Activated CD4-positive, alpha-beta T cell treated with anti-CD3 and anti-CD28 coated beads, Interleukin-2, amount 10 ng/mL, durations not matched to agents 24 days and 14 days (primary cell): ENCODE measurements at regions of chr1 and their contacts with region 1.

Region 1: GRCh38 chr1:199113265-199113869 is 474.5 kb downstream of the PTPRC start:
- DNase-seq: peak; percentile 89
- H3K4me3 Mint-ChIP-seq: no peak overlapping the region
- H3K27ac Mint-ChIP-seq: no peak overlapping the region
- H3K4me1 Mint-ChIP-seq: peaks cover 11% of the 10 kb centered on the region
- H3K27me3 Mint-ChIP-seq: no peaks in the 10 kb centered on the region

Region 2: GRCh38 chr1:198959032-198959431 is 154.3 kb before region 1 on chr1:
- intact Hi-C with region 1: no loop called
- DNase-seq: peak; percentile 71
- H3K4me3 Mint-ChIP-seq: peak overlapping the region; percentile 28
- H3K27ac Mint-ChIP-seq: peak overlapping the region; percentile 17
- H3K4me1 Mint-ChIP-seq: peaks cover 27% of the 10 kb centered on the region
- H3K27me3 Mint-ChIP-seq: no peaks in the 10 kb centered on the region

Region 3: GRCh38 chr1:199243423-199244061 is 130.2 kb after region 1 on chr1:
- intact Hi-C with region 1: loop called (anchors 2 kb)
- DNase-seq: peak; percentile 93
- H3K4me3 Mint-ChIP-seq: no peak overlapping the region
- H3K27ac Mint-ChIP-seq: no peak overlapping the region
- H3K4me1 Mint-ChIP-seq: peaks cover 19% of the 10 kb centered on the region
- H3K27me3 Mint-ChIP-seq: peaks cover 24% of the 10 kb centered on the region

Region 4: GRCh38 chr1:199322278-199322677 is 208.9 kb after region 1 on chr1:
- intact Hi-C with region 1: no loop called
- DNase-seq: no peak
- H3K4me3 Mint-ChIP-seq: no peak overlapping the region
- H3K27ac Mint-ChIP-seq: no peak overlapping the region
- H3K4me1 Mint-ChIP-seq: no peaks in the 10 kb centered on the region
- H3K27me3 Mint-ChIP-seq: peaks cover 19% of the 10 kb centered on the region